Ovary (tissue), 10 donors: ENCODE measurements at regions of chr7 and their contacts with region 1.

Region 1: DNA sequence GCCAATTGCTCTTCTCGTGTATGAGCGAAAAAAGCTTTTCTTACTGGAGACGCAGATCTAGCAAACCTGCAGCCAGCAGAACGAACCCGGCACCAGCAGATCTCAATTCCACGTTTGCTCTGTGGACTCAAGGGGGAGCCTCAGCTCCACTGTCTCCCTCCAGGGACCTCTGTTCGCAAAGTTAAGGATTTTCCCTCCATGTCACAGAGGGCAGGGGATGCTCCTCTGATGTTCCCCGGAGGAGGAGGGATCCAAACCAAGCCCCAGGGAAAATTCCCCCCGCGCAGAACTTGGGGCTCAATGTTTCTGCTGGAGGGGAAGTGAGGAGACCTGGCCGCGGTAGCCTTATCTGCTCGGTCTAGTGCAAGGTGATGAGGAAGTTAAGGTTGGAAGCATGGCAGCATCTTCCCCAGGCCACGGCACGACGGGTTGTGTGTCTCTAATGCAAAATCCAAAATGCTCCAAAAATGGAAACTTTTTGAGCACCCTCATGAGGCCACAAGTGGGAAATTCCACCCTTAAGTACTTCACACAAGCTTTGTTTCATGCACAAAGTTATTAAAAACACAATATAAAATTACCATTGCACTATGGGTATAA is 9.0 kb downstream of the IQCE start:
- DNase-seq: peak; percentile 35 to 62 (median 52)
- H3K4me3 ChIP-seq: no peak overlapping the region
- H3K27ac ChIP-seq: no peak overlapping the region
- H3K4me1 ChIP-seq: no peaks in the 10 kb centered on the region
- H3K27me3 ChIP-seq: no peaks in the 10 kb centered on the region
- CTCF ChIP-seq: peak in 2 of 3 donors; percentile 18 to 36
- EP300 ChIP-seq: no peak
- POLR2A ChIP-seq: no peak

Region 2: GRCh38 chr7:2477447-2478398 is 90.1 kb before region 1 on chr7:
- intact Hi-C with region 1: loop called in 1 of 4 experiments (anchors 10 kb)
- DNase-seq: no peak
- H3K4me3 ChIP-seq: no peak overlapping the region
- H3K27ac ChIP-seq: no peak overlapping the region
- H3K4me1 ChIP-seq: no peaks in the 10 kb centered on the region
- H3K27me3 ChIP-seq: no peaks in the 10 kb centered on the region
- CTCF ChIP-seq: peak in 1 of 3 donors; percentile 27
- EP300 ChIP-seq: no peak
- POLR2A ChIP-seq: no peak